ENCODE measurements at regions of chr17 and their contacts with region 1.

Region 1: DNA sequence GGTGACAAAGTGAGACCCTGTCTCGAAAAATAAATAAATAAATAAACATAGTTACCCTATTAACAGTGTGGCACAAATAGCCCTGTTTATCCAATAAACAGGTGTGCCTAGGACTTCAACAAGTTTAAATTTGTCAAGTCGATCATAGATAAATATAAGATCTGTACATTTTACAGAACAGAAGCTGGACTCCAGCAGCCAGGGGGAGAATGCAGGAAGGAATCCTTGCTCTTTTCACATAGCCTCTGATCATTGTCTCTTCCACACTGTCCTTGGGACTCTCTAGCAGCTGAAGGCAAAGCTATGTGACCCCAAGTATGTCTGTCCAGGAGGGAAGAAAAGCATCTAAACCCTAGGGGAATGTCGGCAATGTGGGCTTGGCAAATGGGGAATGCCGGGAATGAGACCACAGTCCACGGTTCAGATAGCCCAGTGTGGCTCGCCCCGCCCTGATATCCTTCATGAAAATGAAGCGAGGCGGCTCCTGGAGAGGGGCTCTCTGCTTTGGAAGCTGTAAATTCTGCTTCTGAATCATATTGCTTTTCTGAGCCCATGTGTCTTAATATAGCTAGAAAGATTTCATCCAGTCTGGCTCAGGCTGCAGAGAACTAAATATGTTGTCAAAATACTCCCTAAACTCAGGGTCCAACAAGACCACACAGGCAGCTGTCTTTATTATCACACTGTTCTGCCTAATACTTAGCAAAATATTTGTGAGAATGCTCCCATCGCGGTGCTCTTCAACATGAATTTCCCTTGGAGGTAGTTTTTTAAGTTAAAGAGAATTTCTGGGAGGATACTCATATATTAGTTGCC is 24.9 kb upstream of the GRB2 start:
- DNase-seq: peak; percentile 90
- ATAC-seq: peak; percentile 89
- H3K4me3 ChIP-seq: peak overlapping the region; percentile 49 to 62 (median 50)
- H3K27ac ChIP-seq: peak overlapping the region; percentile 61
- H3K4me1 ChIP-seq: peaks cover 80% of the 10 kb centered on the region
- H3K27me3 ChIP-seq: no peaks in the 10 kb centered on the region
- CTCF ChIP-seq: peak; percentile 30; the same call in 1 of the 2 replicates
- EP300 ChIP-seq: peak; percentile 66 to 81; a peak in 3 of 4 replicates
- POLR2A ChIP-seq: peak; percentile 60 to 67; a peak in 3 of 4 replicates
- RAD21 ChIP-seq: 0 out of 2 replicates have a peak, but pooled peaks have one; percentile 32

Region 2: DNA sequence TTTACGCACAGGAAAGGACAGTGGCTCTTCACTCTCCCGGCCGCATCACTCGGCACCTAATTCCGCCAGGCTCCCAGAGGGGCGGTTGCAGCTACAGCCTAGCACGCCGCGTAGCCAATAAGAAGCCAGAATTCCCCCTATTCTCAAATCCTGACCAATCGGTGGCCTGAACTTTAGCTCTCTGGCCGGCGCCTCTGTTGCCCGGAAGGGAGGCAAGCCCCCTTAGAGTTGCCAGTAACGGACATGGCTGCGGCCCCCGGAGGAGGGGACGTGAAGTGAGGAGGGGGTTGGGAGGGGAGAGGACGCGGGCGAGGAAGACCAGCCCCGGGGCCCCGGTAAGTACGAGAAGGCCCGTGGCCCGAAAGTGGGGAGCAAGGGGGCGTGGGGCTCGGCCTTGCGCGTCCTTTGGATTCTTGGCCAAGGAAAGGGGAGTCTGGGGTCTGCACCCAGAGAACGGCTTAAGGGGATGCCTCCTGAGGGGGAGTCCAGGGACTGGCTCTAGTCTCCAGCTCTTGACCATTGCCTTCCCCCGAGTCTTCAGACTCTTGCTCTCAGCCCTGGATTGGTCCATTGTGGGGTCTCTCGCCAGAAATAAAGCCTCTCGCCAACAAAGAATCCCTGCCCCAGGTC is 26.2 kb after region 1 on chr17 and contains the start of gene TMEM94:
- CTCF ChIA-PET with region 1: interaction called, 3 read pairs
- POLR2A ChIA-PET with region 1: interaction called, 35 read pairs
- in situ Hi-C with region 1: no loop called
- intact Hi-C with region 1: no loop called
- DNase-seq: peak; percentile 99
- ATAC-seq: peak; percentile 90
- H3K4me3 ChIP-seq: peak within 1 kb of the TSS; percentile 70 to 98 (median 87)
- H3K27ac ChIP-seq: peak within 1 kb of the TSS; percentile 93
- H3K4me1 ChIP-seq: peaks cover 87% of the 10 kb centered on the region
- H3K27me3 ChIP-seq: no peaks in the 10 kb centered on the region; a peak in 1 of 5 replicates
- CTCF ChIP-seq: no peak
- EP300 ChIP-seq: no peak
- POLR2A ChIP-seq: peak; percentile 69 to 82; a peak in 3 of 4 replicates
- RAD21 ChIP-seq: no peak
- total RNA-seq, gene TMEM94: 20.8 and 32.6 TPM in 2 replicates

Region 3: GRCh38 chr17:75509528-75510258 is 79.3 kb after region 1 on chr17:
- CTCF ChIA-PET with region 1: no interaction called
- POLR2A ChIA-PET with region 1: interaction called, 3 read pairs
- in situ Hi-C with region 1: loop called (anchors 5 kb)
- intact Hi-C with region 1: no loop called
- DNase-seq: no peak
- ATAC-seq: no peak
- H3K4me3 ChIP-seq: no peak overlapping the region
- H3K27ac ChIP-seq: no peak overlapping the region
- H3K4me1 ChIP-seq: peaks cover 72% of the 10 kb centered on the region
- H3K27me3 ChIP-seq: no peaks in the 10 kb centered on the region; a peak in 1 of 5 replicates
- CTCF ChIP-seq: no peak
- EP300 ChIP-seq: no peak
- POLR2A ChIP-seq: no peak
- RAD21 ChIP-seq: no peak

Region 4: DNA sequence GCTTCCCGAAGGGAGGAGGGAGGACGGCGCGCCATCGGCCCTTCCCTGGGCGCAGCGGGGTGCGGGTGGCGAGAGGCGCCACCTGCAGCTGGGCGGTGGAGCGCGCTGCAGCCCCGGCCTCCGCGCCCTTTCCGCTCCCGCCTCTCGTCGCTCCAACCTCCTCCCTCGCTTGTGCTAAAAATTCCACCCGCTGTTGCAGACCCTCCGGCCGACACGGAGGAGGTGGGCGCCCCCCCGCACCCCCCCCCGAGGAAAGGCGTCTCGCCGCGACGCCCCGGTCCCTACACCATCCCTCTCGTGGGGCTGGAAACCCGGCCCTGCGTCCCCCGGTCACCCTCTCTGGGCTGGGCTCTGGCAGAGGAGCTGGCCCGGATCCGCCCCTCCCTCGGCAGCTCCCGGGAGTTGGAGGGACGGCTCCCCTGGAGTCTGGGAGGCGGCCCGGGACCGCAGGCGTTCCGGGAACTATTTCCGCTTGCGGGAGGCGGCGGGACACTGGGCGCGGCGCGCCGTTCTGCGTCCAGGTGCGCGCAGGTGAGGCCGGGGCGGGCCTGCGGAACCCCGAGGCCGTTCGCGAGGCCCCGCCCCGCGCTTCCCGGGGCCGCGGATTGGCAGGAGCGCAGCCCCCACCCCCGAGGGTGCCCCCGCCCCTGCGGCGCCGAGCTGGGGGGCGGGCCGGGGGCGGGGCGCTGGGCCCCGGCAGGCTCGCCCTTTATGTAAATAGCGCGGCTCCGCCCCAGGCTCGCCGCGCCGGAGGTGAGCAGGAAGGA is 94.8 kb after region 1 on chr17 and contains the start of gene LLGL2:
- CTCF ChIA-PET with region 1: interaction called, 12 read pairs
- POLR2A ChIA-PET with region 1: interaction called, 5 read pairs
- in situ Hi-C with region 1: no loop called
- intact Hi-C with region 1: no loop called
- DNase-seq: peak; percentile 83
- ATAC-seq: peak; percentile 81
- H3K4me3 ChIP-seq: peak within 1 kb of the TSS; percentile 85 to 95 (median 86)
- H3K27ac ChIP-seq: peak within 1 kb of the TSS; percentile 72
- H3K4me1 ChIP-seq: peaks cover 21% of the 10 kb centered on the region
- H3K27me3 ChIP-seq: no peaks in the 10 kb centered on the region
- CTCF ChIP-seq: peak; percentile 88
- EP300 ChIP-seq: peak in 1 of 2 experiments; percentile 32; a peak in 2 of 4 replicates
- POLR2A ChIP-seq: peak in 1 of 2 experiments; percentile 64; a peak in 2 of 4 replicates
- RAD21 ChIP-seq: peak; percentile 87
- total RNA-seq, gene LLGL2: 53.9 and 86.7 TPM in 2 replicates

Measured in HepG2 (cell line).